ENCODE measurements at regions of chr14 and their contacts with region 1.

Region 1: GRCh38 chr14:23694085-23694975 is 58.2 kb downstream of the DHRS2 start:
- DNase-seq: peak in 1 of 2 experiments; percentile 5
- ATAC-seq: peak in 1 of 2 experiments; percentile 68; a peak in 1 of 6 replicates
- H3K4me3 ChIP-seq: no peak overlapping the region
- H3K27ac ChIP-seq: peak overlapping the region; percentile 59 to 68; a peak in 4 of 6 replicates
- H3K4me1 ChIP-seq: peaks cover 12% of the 10 kb centered on the region; the same call in 2 of the 3 replicates
- CTCF ChIP-seq: no peak
- EP300 ChIP-seq: no peak
- POLR2A ChIP-seq: no peak
- RAD21 ChIP-seq: no peak

Region 2: DNA sequence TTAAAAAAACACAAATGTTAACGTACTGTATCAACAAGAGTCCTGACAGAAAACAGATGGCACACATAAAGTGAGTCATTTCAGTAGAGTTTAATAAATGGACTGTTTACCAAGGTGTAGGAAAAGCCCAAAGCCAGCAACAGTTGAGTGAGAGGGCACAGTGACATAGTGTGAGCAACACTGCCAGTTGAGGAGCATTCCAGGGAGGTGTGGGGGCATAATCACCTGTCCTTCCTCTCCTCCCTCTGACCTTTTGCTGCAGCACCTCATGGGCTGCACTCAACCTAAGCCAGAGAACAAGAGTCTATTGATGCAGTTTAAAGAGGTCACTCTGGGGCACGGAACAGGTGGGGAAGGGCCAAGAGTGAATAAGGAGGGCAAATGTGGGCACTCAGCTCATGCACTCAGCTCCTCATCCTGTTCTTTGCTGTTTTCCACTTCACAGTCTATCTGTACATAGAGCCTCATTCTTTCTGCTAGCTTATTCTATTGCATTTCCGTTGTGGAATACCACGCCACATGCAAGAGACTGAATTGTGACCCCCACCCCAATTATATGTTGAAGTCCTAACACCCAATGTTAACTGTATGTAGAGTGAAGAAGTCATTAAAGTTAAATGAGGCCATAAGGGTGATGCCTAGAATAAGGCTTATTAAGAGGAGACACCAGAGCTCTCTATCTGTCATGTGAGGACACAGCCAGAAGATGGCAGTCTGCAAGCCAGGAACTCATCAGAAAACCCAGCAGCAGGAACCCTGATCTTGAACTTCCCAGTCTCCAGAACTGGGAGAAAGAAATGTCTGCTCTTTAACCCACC is 28.7 kb before region 1 on chr14:
- CTCF ChIA-PET with region 1: interaction called, 12 read pairs
- POLR2A ChIA-PET with region 1: no interaction called
- DNase-seq: peak; percentile 27 to 63
- ATAC-seq: peak; percentile 82 to 91
- H3K4me3 ChIP-seq: no peak overlapping the region
- H3K27ac ChIP-seq: no peak overlapping the region
- H3K4me1 ChIP-seq: no peaks in the 10 kb centered on the region
- CTCF ChIP-seq: peak; percentile 50
- EP300 ChIP-seq: no peak
- POLR2A ChIP-seq: no peak
- RAD21 ChIP-seq: peak; percentile 44 to 57; a peak in 4 of 5 replicates

Region 3: GRCh38 chr14:23865502-23865901 is 171.2 kb after region 1 on chr14:
- CTCF ChIA-PET with region 1: no interaction called
- POLR2A ChIA-PET with region 1: no interaction called
- DNase-seq: no peak
- ATAC-seq: no peak
- H3K4me3 ChIP-seq: no peak overlapping the region
- H3K27ac ChIP-seq: no peak overlapping the region
- H3K4me1 ChIP-seq: no peaks in the 10 kb centered on the region
- CTCF ChIP-seq: no peak
- EP300 ChIP-seq: no peak
- POLR2A ChIP-seq: no peak
- RAD21 ChIP-seq: no peak